Aorta (tissue), 5 donors: ENCODE measurements at regions of chr2 and their contacts with region 1.

Region 1: GRCh38 chr2:144583741-144584453 is 64.0 kb upstream of the ZEB2 start:
- DNase-seq: no peak
- ATAC-seq: no peak
- H3K4me3 ChIP-seq: no peak overlapping the region
- H3K27ac ChIP-seq: no peak overlapping the region
- H3K4me1 ChIP-seq: peaks cover 0 to 2% of the 10 kb centered on the region in 2 donors
- H3K27me3 ChIP-seq: no peaks in the 10 kb centered on the region

Region 2: GRCh38 chr2:144703852-144704708 is 120.2 kb after region 1 on chr2:
- intact Hi-C with region 1: loop called in 1 of 2 experiments (anchors 10 kb)
- DNase-seq: peak in 1 of 2 donors; percentile 44
- ATAC-seq: peak; percentile 63
- H3K4me3 ChIP-seq: no peak overlapping the region
- H3K27ac ChIP-seq: no peak overlapping the region
- H3K4me1 ChIP-seq: peaks cover 0 to 2% of the 10 kb centered on the region in 2 donors
- H3K27me3 ChIP-seq: no peaks in the 10 kb centered on the region